ENCODE measurements at regions of chr3 and their contacts with region 1.

Region 1: DNA sequence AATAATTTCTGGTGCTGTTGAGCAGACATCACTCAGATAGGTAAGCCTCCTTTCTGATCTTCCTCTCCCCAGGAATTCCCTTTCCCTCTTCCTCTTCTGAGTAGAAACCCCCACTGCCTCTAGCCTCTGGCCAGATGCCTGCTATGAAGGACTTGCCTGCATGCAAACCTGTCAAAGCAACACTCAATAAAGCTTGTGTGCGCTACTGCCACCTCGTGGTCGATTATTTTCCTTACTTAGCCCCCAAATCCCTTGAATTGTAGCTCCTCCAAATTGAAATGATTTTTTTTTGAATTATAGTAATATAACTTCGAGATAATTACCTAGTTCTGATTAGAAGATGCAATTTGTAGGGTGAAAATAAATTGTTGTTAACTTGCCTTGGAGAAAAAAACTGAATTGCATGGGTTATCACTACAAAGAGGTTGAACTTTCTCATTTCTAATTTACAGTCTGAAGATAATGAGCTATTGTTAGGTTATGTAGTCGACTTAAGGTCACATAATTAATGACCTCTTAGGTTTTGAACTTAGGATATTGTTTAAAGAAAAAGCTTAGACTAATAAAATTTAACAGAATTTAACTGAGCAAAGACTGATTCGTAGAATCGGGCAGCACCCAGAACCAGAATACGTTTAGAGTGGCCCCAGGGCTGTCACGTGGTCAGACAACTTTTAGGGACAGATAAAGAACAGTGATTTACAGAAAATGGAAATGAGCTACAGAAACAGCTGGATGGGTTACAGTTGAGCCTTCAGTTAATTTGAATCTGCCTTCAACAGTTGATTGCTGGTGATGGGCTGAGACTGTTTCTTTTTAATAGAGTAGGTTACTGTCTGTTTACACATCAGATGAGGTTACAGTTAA is 269.3 kb downstream of the ARPP21 start:
- DNase-seq: peak; percentile 73 to 85
- H3K4me3 ChIP-seq: no peak overlapping the region
- H3K27ac ChIP-seq: no peak overlapping the region
- H3K4me1 ChIP-seq: no peaks in the 10 kb centered on the region; a peak in 1 of 7 replicates
- H3K27me3 ChIP-seq: peaks cover 0 to 2% (median 0%) of the 10 kb centered on the region in 4 experiments; a peak in 1 of 7 replicates
- CTCF ChIP-seq: peak; percentile 10 to 75 (median 73)
- EP300 ChIP-seq: no peak
- POLR2A ChIP-seq: no peak
- RAD21 ChIP-seq: peak; percentile 78 to 84

Region 2: GRCh38 chr3:35602395-35602936 is 306.1 kb before region 1 on chr3:
- CTCF ChIA-PET with region 1: no interaction called
- POLR2A ChIA-PET with region 1: no interaction called
- DNase-seq: no peak
- H3K4me3 ChIP-seq: no peak overlapping the region
- H3K27ac ChIP-seq: no peak overlapping the region
- H3K4me1 ChIP-seq: no peaks in the 10 kb centered on the region
- H3K27me3 ChIP-seq: no peaks in the 10 kb centered on the region
- CTCF ChIP-seq: no peak
- EP300 ChIP-seq: no peak
- POLR2A ChIP-seq: no peak
- RAD21 ChIP-seq: no peak

Region 3: DNA sequence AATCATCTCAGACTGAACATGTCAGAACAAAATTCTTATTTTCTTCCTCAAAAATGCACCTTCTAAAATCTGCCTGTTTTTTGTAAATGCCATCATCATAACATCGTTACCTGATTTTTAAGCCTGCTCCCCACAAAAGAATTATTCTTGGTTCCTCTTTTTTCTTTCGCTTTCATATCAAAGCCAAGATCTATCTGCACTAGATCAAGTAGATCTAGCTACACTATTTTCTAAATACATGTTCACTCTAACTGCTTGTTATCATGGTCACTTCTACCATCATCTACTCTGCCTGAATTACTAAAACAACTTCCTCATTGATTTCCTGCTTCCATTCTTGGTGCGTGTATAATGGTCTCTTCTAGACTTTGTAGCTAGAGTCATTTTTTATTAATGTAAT is 51.6 kb before region 1 on chr3:
- CTCF ChIA-PET with region 1: no interaction called
- POLR2A ChIA-PET with region 1: no interaction called
- DNase-seq: no peak
- H3K4me3 ChIP-seq: no peak overlapping the region
- H3K27ac ChIP-seq: no peak overlapping the region
- H3K4me1 ChIP-seq: no peaks in the 10 kb centered on the region
- H3K27me3 ChIP-seq: no peaks in the 10 kb centered on the region
- CTCF ChIP-seq: no peak
- EP300 ChIP-seq: no peak
- POLR2A ChIP-seq: no peak
- RAD21 ChIP-seq: no peak

Region 4: GRCh38 chr3:35894735-35895134 is 13.9 kb before region 1 on chr3:
- CTCF ChIA-PET with region 1: interaction called, 13 read pairs
- POLR2A ChIA-PET with region 1: no interaction called
- DNase-seq: no peak
- H3K4me3 ChIP-seq: no peak overlapping the region
- H3K27ac ChIP-seq: no peak overlapping the region
- H3K4me1 ChIP-seq: 0 out of 7 replicates have a peak, but pooled peaks cover 0 to 4% (median 0%) of the 10 kb centered on the region in 4 experiments
- H3K27me3 ChIP-seq: no peaks in the 10 kb centered on the region
- CTCF ChIP-seq: no peak
- EP300 ChIP-seq: no peak
- POLR2A ChIP-seq: no peak
- RAD21 ChIP-seq: no peak

Region 5: GRCh38 chr3:35921706-35922105 is 13.1 kb after region 1 on chr3:
- CTCF ChIA-PET with region 1: interaction called, 12 read pairs
- POLR2A ChIA-PET with region 1: no interaction called
- DNase-seq: no peak
- H3K4me3 ChIP-seq: no peak overlapping the region
- H3K27ac ChIP-seq: no peak overlapping the region
- H3K4me1 ChIP-seq: no peaks in the 10 kb centered on the region
- H3K27me3 ChIP-seq: no peaks in the 10 kb centered on the region
- CTCF ChIP-seq: no peak
- EP300 ChIP-seq: no peak
- POLR2A ChIP-seq: no peak
- RAD21 ChIP-seq: no peak

Region 6: GRCh38 chr3:35929158-35929557 is 20.6 kb after region 1 on chr3:
- CTCF ChIA-PET with region 1: interaction called, 11 read pairs
- POLR2A ChIA-PET with region 1: no interaction called
- DNase-seq: no peak
- H3K4me3 ChIP-seq: no peak overlapping the region
- H3K27ac ChIP-seq: no peak overlapping the region
- H3K4me1 ChIP-seq: no peaks in the 10 kb centered on the region
- H3K27me3 ChIP-seq: no peaks in the 10 kb centered on the region
- CTCF ChIP-seq: no peak
- EP300 ChIP-seq: no peak
- POLR2A ChIP-seq: no peak
- RAD21 ChIP-seq: no peak

Measured in H1 (cell line).